GM13976 (cell line): ENCODE measurements at regions of chr1 and their contacts with region 1.

Region 1: DNA sequence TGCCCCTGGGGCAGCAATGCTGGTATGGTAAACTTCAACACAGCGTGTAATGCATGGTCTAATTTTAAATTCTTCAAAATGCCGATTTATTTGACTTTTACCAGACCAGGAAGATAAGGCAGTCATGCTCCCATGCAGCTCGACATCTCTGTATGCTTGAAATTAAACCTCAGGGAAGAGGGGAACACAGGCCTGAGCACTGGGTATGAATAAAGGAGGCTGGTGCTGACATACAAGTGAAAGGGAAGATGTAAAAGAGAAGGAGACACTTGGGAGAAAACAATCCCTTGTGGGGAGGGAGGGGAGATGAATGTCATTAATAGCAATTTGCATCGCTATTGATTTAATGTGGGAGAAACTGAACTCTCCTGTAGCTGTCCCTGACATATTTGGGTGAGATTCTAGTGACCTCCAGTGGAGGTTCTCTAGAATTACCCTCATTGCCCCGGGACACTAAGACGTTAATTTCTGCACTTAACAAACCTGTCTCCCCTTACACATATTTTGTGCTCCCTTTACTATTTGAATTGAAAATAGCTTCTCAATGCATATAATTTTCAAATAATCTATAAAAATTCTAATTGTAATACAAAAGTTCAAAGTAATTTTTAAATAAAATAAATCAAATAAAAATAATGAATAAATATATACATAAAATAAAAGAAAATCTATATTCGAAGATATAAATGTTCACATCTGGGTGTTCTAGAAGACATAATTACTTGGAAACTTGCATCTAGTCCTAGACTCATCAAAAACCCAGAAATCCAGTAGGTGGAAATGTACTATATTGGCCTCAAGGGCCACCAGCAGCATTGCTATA is 283.1 kb downstream of the LMX1A start:
- DNase-seq: peak; percentile 37
- CTCF ChIP-seq: peak; percentile 32

Region 2: DNA sequence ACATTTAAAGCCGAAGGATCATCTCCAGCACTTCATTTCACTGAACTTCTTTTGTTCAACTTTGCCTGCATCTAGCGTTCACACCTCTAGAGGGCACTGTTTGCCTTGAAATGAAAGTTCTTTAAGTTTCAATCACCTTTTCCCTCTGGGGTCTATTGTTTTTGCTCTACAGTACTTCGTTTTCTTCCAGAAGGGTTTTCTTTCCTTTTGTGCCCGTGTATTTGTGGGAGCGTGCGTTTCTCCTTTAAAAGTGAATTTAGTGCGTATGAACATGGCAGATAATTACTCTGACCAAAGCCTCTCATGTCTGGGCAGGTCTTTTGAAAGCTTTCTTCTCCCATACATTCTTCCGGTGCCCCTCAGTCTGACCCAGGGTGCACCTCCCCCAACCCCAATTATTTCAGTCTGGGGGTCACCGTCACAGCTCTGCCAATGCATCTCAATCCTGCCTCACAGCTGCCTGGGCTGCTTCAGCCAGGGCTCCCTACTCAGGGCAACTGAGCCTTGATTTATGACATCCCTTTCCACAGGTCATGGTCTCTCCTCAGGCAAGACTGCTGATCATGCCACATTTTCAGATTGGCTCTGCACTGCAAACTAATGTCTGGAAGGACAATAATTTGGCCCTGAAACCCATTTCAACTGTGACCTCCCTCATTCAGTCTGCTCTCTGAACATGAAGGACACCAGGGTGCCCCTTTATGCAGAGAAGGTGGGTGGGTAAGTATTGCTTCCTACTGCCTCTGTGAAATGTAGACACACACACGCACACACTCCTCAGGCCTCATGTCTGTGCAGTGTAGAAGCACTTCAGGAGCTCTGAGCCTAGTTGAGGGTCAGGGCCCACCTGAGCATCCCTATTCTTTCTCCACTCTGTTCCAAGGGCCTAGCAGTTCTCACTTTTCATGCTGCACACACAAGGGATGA is 1663.1 kb before region 1 on chr1:
- in situ Hi-C with region 1: loop called (anchors 25 kb)
- DNase-seq: peak; percentile 46
- CTCF ChIP-seq: peak; percentile 69